Naive thymus-derived CD8-positive, alpha-beta T cell (primary cell): ENCODE measurements at regions of chr4 and their contacts with region 1.

Region 1: GRCh38 chr4:124275-125081 is at the start of gene ZNF718:
- DNase-seq: peak; percentile 75 to 96 (median 91)
- ATAC-seq: peak; percentile 93 to 96
- H3K4me3 Mint-ChIP-seq: peak within 1 kb of the TSS; percentile 94 to 100 (median 98)
- H3K27ac Mint-ChIP-seq: peak within 1 kb of the TSS; percentile 96 to 100 (median 98)
- H3K4me1 Mint-ChIP-seq: peaks cover 14 to 46% (median 41%) of the 10 kb centered on the region in 4 donors
- H3K27me3 Mint-ChIP-seq: no peaks in the 10 kb centered on the region
- polyA plus RNA-seq, gene ZNF718: 4.7 to 5.4 (median 5.1) TPM

Region 2: DNA sequence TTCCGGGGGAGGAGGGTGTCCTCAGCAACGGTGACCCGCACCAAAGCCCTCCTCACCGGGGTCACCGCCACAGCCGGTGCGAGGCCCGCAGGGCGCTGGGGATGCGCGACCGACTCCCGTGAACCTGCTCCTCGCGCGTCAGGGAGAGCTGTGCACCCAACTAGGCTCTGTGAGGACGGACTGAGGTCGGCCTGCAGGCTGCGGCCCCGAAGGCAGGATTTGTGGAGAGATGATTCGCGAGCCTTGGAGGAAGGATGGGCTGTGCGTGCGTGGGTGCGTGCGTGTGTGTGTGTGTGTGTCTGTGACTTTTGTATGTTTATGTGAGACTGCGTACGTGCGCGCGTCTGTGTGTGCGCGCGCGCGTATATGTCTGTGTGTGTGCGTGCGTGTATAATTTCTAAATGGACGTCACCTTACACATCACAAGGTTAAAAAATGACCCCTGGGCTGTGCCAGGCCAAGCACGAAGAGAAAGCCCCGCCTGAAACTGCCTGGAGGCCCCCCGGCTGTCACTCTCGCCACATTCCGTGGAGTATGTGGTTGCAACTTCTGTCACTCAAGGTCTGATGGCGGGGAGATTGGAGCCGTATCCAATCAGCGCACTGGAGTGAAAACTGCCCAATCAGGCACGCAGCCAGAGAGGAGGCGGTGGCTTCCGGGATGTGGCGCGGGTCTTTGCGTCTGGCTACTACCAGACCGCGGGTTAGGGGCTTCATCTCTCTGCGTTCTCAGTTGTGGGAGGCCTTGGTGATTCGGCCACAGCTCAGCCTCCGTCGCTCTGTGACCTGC is 212.9 kb after region 1 on chr4 and contains the start of gene ZNF141:
- POLR2A ChIA-PET with region 1: interaction called, 12 read pairs
- DNase-seq: peak; percentile 76 to 96 (median 92)
- ATAC-seq: peak; percentile 91 to 92
- H3K4me3 Mint-ChIP-seq: peak within 1 kb of the TSS; percentile 94 to 100 (median 99)
- H3K27ac Mint-ChIP-seq: peak within 1 kb of the TSS; percentile 95 to 100 (median 99)
- H3K4me1 Mint-ChIP-seq: peaks cover 19 to 42% (median 37%) of the 10 kb centered on the region in 4 donors
- H3K27me3 Mint-ChIP-seq: peaks cover 0 to 2% (median 0%) of the 10 kb centered on the region in 5 donors
- polyA plus RNA-seq, gene ZNF141: 11.6 to 16.4 (median 12.3) TPM